Left ventricle myocardium superior (tissue), 1 donor: ENCODE measurements at regions of chr14 and their contacts with region 1.

Region 1: DNA sequence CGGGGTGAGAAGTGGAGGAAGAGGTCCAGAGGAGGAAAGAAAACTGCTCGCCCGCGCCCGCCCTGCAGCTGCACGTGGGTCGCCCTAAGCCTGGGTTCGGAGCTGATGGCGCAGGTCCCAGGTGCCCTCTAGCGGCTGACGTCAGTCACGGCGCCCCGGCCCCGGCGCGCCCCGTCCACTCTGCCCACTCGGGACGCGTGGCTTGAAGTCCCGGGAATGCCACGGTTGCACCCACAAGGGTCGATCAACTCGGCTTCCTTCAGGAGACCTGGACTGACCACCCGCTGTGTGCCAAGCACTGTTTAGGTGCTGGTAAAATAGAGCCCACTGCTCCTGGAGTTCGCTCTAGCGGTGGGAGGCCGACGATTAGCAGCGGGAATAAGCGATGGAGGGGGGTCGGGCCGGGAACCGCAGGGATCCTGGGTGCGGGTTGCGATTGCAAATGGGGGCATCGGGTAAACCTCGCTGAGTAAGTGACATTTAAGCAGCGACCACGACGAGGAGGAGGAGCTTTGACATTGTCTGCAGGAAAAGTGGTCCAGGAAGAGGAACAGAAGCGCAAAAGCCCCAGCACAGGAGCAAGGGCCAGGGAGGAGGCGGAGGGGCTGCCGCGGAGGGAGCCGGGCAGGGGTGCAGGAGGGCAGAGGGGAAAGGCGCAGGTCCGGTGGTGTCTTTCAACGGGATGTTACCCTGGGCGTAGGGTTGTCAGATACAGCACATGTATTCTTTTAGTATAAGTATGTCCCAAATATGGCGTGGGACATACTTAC is 5.1 kb upstream of the ZNF839 start:
- DNase-seq: peak; percentile 92
- ATAC-seq: peak; percentile 64

Region 2: GRCh38 chr14:102235275-102235897 is 79.0 kb before region 1 on chr14:
- intact Hi-C with region 1: loop called (anchors 2 kb)
- DNase-seq: peak; percentile 91
- ATAC-seq: peak; percentile 96

Region 3: GRCh38 chr14:102262929-102263462 is 51.4 kb before region 1 on chr14:
- intact Hi-C with region 1: no loop called
- DNase-seq: peak; percentile 42
- ATAC-seq: peak; percentile 21

Region 4: DNA sequence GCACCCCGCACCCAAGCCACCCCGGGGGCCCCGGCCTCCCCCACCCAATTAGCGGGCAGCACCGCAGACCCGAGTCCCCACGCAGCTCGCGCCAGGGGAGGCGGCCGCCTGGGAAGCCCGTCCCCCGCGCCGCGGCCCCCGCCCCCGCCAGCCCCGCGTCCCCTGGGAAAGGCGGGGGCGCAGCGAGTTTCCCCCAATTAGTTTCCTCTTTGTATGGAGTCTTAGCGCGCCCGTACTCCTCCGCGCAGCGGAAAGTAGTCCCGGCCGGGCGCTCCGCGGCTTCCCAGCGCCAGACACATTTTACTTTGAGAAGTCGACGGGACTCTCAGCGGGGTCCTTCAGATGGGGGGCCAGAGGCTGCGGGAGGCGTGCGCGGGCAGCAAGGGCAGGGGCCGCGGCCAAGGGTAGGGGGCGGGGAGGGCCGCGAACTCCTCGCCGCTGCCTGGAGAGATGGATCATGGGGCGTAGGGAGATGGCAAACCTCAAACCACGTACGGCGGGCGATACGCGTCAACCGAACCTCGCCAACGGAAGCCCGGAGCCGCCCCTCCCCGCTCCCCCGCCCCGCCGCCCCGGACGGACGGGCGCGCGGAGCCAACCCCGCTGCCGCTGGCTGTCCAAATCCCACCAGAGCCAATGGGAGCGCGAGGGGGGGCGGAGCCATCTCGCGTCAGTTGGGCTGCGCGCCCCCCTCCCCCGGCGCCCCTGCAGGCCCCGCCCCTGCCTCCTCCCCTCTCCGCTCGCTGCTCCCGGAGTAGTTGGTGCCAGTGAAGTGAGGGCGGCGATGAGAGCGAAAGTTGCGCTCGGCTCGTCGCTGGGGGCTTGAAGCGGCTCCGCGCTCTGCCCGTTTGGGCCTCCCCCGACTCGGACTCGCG is 277.7 kb after region 1 on chr14 and contains the start of gene RCOR1:
- intact Hi-C with region 1: no loop called
- DNase-seq: peak; percentile 99
- ATAC-seq: peak; percentile 94
- total RNA-seq, gene RCOR1: 13.0 TPM